H1 (cell line): ENCODE measurements at regions of chr9 and their contacts with region 1.

Region 1: GRCh38 chr9:114108016-114108833 is 9.1 kb upstream of the KIF12 start:
- DNase-seq: peak; percentile 80 to 93
- H3K4me3 ChIP-seq: no peak overlapping the region
- H3K27ac ChIP-seq: no peak overlapping the region
- H3K4me1 ChIP-seq: peaks cover 0 to 9% (median 7%) of the 10 kb centered on the region in 4 experiments; a peak in 6 of 7 replicates
- H3K27me3 ChIP-seq: peaks cover 0 to 15% (median 4%) of the 10 kb centered on the region in 4 experiments; a peak in 3 of 7 replicates
- CTCF ChIP-seq: peak; percentile 98 to 99 (median 98)
- EP300 ChIP-seq: no peak
- POLR2A ChIP-seq: no peak
- RAD21 ChIP-seq: peak; percentile 99

Region 2: DNA sequence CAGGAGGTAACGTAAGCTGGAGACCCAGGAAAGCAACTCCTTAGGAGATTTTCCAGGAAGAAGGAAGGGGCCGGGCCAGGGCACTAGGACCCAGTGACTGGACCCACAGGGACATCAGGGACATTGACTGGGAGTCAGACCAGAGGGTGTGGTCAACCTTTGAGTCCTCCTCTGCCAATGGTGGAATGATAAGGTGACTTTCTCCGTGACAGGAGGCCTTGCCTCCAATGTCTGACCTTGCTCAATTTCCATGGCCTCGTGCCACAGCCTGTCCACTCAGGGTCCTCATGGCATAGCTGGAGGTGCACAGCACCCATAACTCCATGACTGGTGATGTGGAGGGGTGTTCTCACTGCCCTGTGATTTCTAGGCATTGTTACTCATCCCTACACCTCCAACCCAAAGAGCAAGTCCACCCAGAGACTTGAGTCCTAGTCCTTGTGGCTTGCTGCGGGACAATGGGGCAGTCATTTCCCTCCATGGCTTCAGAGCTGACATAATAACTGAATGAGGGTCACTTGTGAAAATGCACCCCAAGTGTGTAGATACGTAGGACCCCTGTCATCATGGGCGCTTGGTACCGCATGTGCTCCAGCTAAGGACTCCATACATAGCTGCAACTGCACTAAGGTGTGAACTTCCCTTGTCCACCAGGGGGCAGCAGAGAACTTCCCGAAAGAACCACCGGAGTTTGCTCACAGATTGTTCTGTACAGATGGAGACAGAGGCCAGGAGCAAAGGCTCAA is 26.0 kb before region 1 on chr9:
- CTCF ChIA-PET with region 1: interaction called, 82 read pairs
- POLR2A ChIA-PET with region 1: no interaction called
- DNase-seq: peak in 1 of 2 experiments; percentile 97
- H3K4me3 ChIP-seq: no peak overlapping the region
- H3K27ac ChIP-seq: no peak overlapping the region
- H3K4me1 ChIP-seq: peaks cover 0 to 6% (median 3%) of the 10 kb centered on the region in 4 experiments; a peak in 4 of 7 replicates
- H3K27me3 ChIP-seq: peaks cover 0 to 3% (median under 1%) of the 10 kb centered on the region in 4 experiments; a peak in 3 of 7 replicates
- CTCF ChIP-seq: peak; percentile 83 to 96 (median 94)
- EP300 ChIP-seq: no peak
- POLR2A ChIP-seq: no peak
- RAD21 ChIP-seq: peak; percentile 94

Region 3: DNA sequence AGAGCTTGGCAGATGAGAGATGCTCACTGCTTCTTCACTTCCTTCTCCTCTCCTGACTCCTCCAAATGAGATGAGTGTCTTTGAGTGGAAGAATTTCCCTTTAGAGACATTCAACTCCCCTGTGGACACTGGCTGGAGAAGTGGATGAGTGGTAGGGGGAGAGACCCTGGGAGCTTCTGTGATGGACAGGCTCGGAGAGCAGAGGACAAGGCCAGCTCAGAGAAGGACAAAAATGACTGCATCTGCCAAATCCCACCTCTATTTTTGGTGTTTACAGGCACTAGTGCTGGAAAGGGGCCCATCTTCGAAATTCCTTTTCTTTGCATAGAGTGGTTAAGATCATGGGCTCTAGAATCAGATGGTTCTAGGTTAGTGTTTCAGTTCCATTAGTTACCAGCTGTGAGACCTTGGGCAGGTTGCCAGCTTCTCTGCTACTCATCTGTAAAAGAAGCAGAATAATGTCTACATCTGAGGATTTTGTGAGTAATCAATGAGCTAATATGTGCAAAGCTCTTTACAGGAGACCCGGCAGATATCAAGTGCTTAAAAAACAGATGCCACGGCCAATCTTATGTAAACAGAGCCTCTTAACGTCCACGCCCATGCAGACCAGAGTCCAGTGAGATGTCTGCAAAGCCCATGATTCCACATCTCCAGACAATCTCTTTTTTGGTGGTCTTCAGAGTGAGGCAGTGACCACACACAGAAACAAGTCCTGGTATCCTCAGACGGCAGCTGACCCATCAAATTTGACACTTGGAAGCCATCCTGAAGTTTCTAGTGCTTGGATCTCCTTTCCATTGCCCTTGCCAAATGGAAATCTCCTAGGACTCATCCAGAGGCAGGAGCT is 33.6 kb after region 1 on chr9:
- CTCF ChIA-PET with region 1: interaction called, 40 read pairs
- POLR2A ChIA-PET with region 1: no interaction called
- DNase-seq: no peak
- H3K4me3 ChIP-seq: no peak overlapping the region
- H3K27ac ChIP-seq: no peak overlapping the region
- H3K4me1 ChIP-seq: no peaks in the 10 kb centered on the region
- H3K27me3 ChIP-seq: peaks cover 0 to 2% (median 0%) of the 10 kb centered on the region in 4 experiments; a peak in 3 of 7 replicates
- CTCF ChIP-seq: no peak
- EP300 ChIP-seq: no peak
- POLR2A ChIP-seq: no peak
- RAD21 ChIP-seq: no peak

Region 4: DNA sequence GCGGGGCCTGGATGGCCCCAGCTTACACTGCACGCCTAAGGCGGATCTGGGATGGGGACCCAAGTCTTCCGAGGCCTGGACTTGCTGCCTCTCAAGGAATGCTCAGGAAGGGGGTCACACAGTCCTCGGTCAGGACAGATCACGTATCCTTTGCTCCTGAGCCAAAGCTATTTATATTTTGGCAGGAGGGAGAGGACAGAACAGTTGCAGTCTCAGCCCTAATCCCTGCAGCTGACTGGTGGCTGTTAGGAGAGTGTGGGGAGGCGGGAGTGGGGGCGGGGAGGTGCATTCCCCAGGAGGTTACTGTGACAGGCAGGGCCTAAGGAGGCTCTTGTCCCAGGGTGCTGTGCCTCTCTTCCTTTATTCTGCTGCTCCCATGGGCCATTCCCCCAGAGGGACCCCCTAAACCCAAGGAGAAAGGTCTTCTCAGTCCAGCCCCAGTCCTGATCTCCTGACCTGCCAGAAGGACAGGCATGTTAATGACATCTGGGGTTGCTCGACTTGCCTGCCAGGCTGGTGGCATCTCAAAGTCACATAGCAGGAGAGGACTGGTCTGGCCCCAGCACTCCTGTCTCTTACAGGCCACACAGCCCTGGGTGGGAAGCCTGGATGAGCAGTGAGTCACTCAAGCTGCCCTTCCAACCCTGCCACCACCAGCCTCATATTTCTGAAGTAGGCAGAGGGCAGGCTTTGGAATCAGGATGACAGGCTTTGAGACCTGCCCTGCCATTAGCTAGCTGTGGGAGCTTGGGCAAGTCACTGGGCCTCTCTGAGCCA is 99.0 kb after region 1 on chr9:
- CTCF ChIA-PET with region 1: interaction called, 12 read pairs
- POLR2A ChIA-PET with region 1: no interaction called
- DNase-seq: no peak
- H3K4me3 ChIP-seq: no peak overlapping the region
- H3K27ac ChIP-seq: no peak overlapping the region
- H3K4me1 ChIP-seq: peaks cover 0 to 24% (median 6%) of the 10 kb centered on the region in 4 experiments; a peak in 6 of 7 replicates
- H3K27me3 ChIP-seq: no peaks in the 10 kb centered on the region
- CTCF ChIP-seq: no peak
- EP300 ChIP-seq: no peak
- POLR2A ChIP-seq: no peak
- RAD21 ChIP-seq: no peak

Region 5: DNA sequence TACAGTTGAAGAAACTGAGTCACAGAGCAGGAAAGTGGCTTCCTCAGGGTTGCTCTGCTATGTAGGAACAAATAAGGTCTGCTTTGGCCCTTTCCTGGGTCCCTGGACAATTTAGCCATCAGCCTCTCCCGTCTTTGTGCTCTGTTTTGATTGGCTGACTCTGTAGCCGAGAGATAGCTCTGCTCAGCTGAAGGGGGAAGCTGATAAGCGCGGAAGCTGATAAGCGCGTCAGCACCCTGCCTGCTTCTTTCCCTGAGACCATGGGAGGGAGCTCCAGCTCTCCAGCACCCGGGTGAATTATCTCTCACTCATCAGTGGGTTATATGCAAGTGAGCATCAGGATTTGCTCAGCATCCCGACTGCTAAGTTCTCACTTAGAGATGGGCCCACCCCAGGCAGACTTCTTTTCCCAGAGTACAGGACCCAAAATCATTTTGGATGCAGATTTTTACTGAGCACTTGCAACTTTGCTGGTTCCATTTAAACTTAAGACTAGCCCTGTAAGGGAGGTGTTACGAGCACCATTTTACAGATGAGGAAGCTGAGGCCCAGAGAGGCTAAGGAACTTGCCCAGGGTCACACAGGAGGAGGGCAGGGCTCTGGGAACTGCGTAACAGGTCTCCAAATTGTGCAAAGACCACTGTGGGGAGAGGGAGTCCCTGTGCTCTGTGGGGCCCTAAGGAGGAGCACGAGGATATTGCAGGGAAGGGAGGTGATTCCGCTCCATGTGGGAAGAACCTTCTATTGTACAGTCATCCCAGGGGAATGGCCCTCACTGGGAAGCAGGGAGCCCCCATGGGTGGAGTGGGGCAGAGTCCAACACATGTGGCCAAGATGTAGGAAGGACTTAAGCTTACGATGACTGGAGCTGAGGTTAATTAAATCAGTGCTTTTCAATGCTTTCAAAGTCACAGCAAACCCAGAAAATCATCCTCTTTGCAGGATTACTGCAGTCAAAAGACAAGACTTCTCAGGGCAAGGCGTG is 131.0 kb after region 1 on chr9:
- CTCF ChIA-PET with region 1: interaction called, 33 read pairs
- POLR2A ChIA-PET with region 1: no interaction called
- DNase-seq: no peak
- H3K4me3 ChIP-seq: no peak overlapping the region
- H3K27ac ChIP-seq: no peak overlapping the region
- H3K4me1 ChIP-seq: peaks cover 0 to 4% (median 0%) of the 10 kb centered on the region in 4 experiments; a peak in 2 of 7 replicates
- H3K27me3 ChIP-seq: no peaks in the 10 kb centered on the region; a peak in 2 of 7 replicates
- CTCF ChIP-seq: peak in 2 of 3 experiments; percentile 40 to 52; a peak in 3 of 4 replicates
- EP300 ChIP-seq: no peak
- POLR2A ChIP-seq: no peak
- RAD21 ChIP-seq: peak; percentile 52 to 57

Region 6: GRCh38 chr9:114291064-114291474 is 182.8 kb after region 1 on chr9:
- CTCF ChIA-PET with region 1: interaction called, 205 read pairs
- POLR2A ChIA-PET with region 1: interaction called, 8 read pairs
- DNase-seq: peak; percentile 62 to 97
- H3K4me3 ChIP-seq: no peak overlapping the region
- H3K27ac ChIP-seq: no peak overlapping the region
- H3K4me1 ChIP-seq: peaks cover 0 to 13% (median 2%) of the 10 kb centered on the region in 4 experiments; a peak in 5 of 7 replicates
- H3K27me3 ChIP-seq: no peaks in the 10 kb centered on the region
- CTCF ChIP-seq: peak in 2 of 3 experiments; percentile 85 to 92; a peak in 3 of 4 replicates
- EP300 ChIP-seq: no peak
- POLR2A ChIP-seq: no peak
- RAD21 ChIP-seq: peak; percentile 92 to 94